ENCODE measurements at regions of chr1 and their contacts with region 1.

Region 1: GRCh38 chr1:52552505-52553361 is at the start of gene TUT4:
- DNase-seq: peak; percentile 79
- H3K4me3 Mint-ChIP-seq: no peak within 1 kb of the TSS
- H3K27ac Mint-ChIP-seq: peak within 1 kb of the TSS; percentile 94
- H3K4me1 Mint-ChIP-seq: peaks cover 45% of the 10 kb centered on the region
- H3K27me3 Mint-ChIP-seq: no peaks in the 10 kb centered on the region
- CTCF ChIP-seq: no peak
- total RNA-seq, gene TUT4: 83.8 and 90.7 TPM in 2 replicates

Region 2: DNA sequence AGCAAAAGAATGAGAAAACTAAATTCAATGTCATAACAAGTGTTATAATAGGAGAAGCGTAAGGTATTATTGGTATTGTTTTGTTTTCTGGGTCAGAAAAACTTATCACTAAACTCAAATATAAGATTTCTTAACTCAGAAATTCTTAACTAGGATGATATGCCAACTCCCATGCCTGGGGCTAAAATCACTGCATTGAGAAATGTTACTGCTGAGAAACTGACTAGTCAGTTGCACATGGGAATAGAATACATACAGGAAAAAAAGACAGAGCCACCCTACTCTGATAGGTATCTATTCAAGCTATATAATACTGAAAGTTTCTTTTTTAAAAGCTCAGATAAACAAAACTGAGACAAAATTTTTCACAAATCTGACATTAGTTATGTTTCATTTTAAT is 92.0 kb before region 1 on chr1:
- CTCF ChIA-PET with region 1: no interaction called
- POLR2A ChIA-PET with region 1: interaction called, 3 read pairs
- intact Hi-C with region 1: loop called (anchors 5 kb)
- DNase-seq: peak; percentile 69
- H3K4me3 Mint-ChIP-seq: no peak overlapping the region
- H3K27ac Mint-ChIP-seq: no peak overlapping the region
- H3K4me1 Mint-ChIP-seq: peaks cover 7% of the 10 kb centered on the region
- H3K27me3 Mint-ChIP-seq: no peaks in the 10 kb centered on the region
- CTCF ChIP-seq: no peak

Region 3: GRCh38 chr1:52567943-52568342 is 15.2 kb after region 1 on chr1:
- CTCF ChIA-PET with region 1: interaction called, 3 read pairs
- POLR2A ChIA-PET with region 1: interaction called, 102 read pairs
- intact Hi-C with region 1: no loop called
- DNase-seq: no peak
- H3K4me3 Mint-ChIP-seq: no peak overlapping the region
- H3K27ac Mint-ChIP-seq: peak overlapping the region; percentile 6
- H3K4me1 Mint-ChIP-seq: no peaks in the 10 kb centered on the region
- H3K27me3 Mint-ChIP-seq: no peaks in the 10 kb centered on the region
- CTCF ChIP-seq: no peak

Region 4: GRCh38 chr1:52604063-52604770 is 51.5 kb after region 1 on chr1:
- CTCF ChIA-PET with region 1: no interaction called
- POLR2A ChIA-PET with region 1: interaction called, 10 read pairs
- intact Hi-C with region 1: no loop called
- DNase-seq: peak; percentile 28
- H3K4me3 Mint-ChIP-seq: no peak overlapping the region
- H3K27ac Mint-ChIP-seq: peak overlapping the region; percentile 25
- H3K4me1 Mint-ChIP-seq: peaks cover 10% of the 10 kb centered on the region
- H3K27me3 Mint-ChIP-seq: no peaks in the 10 kb centered on the region
- CTCF ChIP-seq: no peak

Region 5: GRCh38 chr1:52629325-52629643 is 76.6 kb after region 1 on chr1:
- CTCF ChIA-PET with region 1: no interaction called
- POLR2A ChIA-PET with region 1: no interaction called
- intact Hi-C with region 1: no loop called
- DNase-seq: no peak
- H3K4me3 Mint-ChIP-seq: no peak overlapping the region
- H3K27ac Mint-ChIP-seq: no peak overlapping the region
- H3K4me1 Mint-ChIP-seq: no peaks in the 10 kb centered on the region
- H3K27me3 Mint-ChIP-seq: no peaks in the 10 kb centered on the region
- CTCF ChIP-seq: no peak

Measured in MCF 10A (cell line).